Activated T-helper 1 cell treated with anti-CD3 and anti-CD28 coated beads, Interleukin-12 subunit alpha, Interleukin-12 subunit beta, Interleukin-2, Interleukin-4 antibody, amounts not matched to agents 30 ng/mL and 10 ng/mL and 1 ng/mL, durations not matched to agents 14 hours and 24 hours and 36 hours (primary cell): ENCODE measurements at regions of chr1 and their contacts with region 1.

Region 1: DNA sequence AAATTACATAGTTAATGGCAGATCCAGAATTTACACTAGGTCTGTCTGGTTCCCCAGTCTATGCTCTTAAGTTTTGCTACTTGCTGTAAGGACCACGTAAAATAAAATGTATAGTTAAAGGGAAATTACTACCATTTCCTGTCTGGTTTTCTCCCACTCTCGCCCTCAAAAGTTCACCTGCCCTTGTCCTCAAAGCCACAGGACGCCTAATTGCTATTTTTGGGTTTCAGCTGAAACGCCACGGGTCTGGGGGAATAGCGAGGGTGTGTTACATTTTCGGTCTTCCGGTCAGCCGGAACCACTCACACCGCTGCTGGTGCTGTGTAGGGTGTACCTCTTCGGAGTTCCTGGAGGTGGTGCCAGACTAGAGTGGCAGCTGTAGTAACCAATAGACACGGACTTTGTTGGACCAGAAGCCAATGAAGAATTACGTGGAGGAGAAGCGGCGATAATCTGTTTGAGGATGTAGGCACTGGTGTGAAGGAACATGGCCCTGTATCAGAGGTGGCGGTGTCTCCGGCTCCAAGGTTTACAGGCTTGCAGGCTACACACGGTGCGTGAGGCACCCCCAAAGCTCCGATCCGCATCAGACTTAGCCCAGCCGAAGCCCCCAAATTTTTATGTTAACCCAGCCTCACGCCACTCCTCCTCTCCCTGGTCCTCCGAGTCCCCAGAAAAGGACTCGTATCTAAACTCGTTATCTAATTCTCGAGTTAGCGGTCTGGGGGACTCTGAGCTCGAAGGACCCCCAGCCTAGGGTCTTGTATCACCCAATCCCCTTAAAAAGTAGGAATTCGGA is at the start of gene TARS2:
- DNase-seq: peak; percentile 94
- H3K4me3 Mint-ChIP-seq: peak within 1 kb of the TSS; percentile 98
- H3K27ac Mint-ChIP-seq: peak within 1 kb of the TSS; percentile 95
- H3K4me1 Mint-ChIP-seq: peaks cover 35% of the 10 kb centered on the region
- H3K27me3 Mint-ChIP-seq: no peaks in the 10 kb centered on the region
- total RNA-seq, gene TARS2: 77.3 and 77.4 TPM in 2 replicates

Region 2: DNA sequence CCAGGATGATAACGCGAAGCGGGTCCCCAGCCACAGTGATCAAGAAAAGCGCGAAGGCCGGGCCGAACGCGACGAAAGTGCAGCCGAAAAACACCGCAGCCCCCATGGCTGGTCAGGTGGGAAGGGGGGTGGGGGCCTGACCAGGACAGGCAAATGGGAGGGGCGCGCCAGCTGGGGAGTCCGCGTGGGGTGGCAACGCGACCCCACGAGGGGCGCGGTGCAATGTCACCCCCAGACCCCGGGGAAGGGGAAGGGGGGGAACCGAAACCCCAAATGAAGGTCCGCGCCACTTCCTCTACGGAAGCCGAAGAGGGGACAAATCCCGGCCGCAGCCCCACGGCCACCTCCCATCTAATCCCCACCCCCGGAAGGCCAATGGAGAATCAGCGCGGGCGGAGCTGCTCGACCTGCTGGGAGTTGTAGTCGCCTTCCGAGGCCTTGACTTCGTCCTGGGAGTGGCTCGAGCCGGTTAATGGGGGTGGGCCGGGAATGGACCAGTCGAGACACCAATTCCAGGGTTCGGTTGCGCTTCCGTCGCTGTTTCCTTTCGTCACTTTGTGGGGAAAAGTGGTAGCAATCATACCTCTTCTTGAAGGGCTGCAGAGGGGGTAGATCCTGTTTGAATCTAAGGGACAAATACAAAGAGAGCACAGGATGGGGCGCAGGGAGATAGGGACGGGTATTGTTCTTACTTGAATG is 218.3 kb before region 1 on chr1 and contains the start of gene APH1A:
- intact Hi-C with region 1: loop called (anchors 1 kb)
- DNase-seq: peak; percentile 94
- H3K4me3 Mint-ChIP-seq: peak within 1 kb of the TSS; percentile 93
- H3K27ac Mint-ChIP-seq: peak within 1 kb of the TSS; percentile 85
- H3K4me1 Mint-ChIP-seq: peaks cover 30% of the 10 kb centered on the region
- H3K27me3 Mint-ChIP-seq: peaks cover 3% of the 10 kb centered on the region
- total RNA-seq, gene APH1A: 102 and 111 TPM in 2 replicates

Region 3: GRCh38 chr1:150363426-150364230 is 123.5 kb before region 1 on chr1 and contains the start of gene RPRD2:
- intact Hi-C with region 1: loop called (anchors 1 kb)
- DNase-seq: peak; percentile 99
- H3K4me3 Mint-ChIP-seq: peak within 1 kb of the TSS; percentile 99
- H3K27ac Mint-ChIP-seq: peak within 1 kb of the TSS; percentile 97
- H3K4me1 Mint-ChIP-seq: peaks cover 41% of the 10 kb centered on the region
- H3K27me3 Mint-ChIP-seq: no peaks in the 10 kb centered on the region
- total RNA-seq, gene RPRD2: 24.4 and 24.7 TPM in 2 replicates

Region 4: GRCh38 chr1:150464422-150464826 is 22.7 kb before region 1 on chr1:
- intact Hi-C with region 1: loop called (anchors 1 kb)
- DNase-seq: peak; percentile 50
- H3K4me3 Mint-ChIP-seq: no peak overlapping the region
- H3K27ac Mint-ChIP-seq: peak overlapping the region; percentile 63
- H3K4me1 Mint-ChIP-seq: peaks cover 5% of the 10 kb centered on the region
- H3K27me3 Mint-ChIP-seq: no peaks in the 10 kb centered on the region

Region 5: DNA sequence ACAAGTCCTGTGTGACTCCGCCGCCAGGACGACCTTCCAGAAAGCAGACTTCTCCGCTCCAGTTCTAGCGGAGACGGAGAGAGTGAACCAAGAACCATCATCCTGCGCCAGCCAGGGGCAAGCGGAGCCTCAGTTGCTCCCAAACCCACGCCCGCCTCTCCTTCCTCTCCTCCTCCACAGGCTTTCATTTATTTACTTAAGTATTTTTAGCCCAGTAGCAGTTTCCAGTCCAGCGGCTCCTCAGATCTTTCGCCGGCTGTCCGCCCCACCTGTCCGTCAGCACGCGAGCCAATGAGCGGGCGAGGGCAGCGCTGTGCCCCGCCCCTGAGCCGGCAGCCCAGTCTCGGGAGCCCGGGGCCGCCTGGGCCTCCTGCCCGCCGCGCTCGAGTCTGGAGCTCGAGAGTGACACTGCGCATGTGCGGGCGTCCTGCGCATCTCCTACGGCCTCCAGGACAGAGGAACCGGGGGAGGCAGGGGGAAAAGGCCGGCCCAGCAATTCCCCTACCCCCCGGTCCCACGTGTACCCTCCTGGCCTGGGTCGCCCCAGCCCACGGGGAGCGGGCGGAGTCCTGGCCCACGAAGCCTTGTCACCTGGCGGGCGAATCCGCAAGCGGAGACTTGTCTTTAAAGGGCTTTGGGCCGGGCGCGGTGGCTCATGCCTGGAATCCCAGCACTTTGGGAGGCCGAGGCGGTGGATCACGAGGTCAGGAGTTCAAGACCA is 28.3 kb after region 1 on chr1 and contains the start of gene FALEC:
- intact Hi-C with region 1: loop called (anchors 1 kb)
- DNase-seq: peak; percentile 93
- H3K4me3 Mint-ChIP-seq: peak within 1 kb of the TSS; percentile 79
- H3K27ac Mint-ChIP-seq: peak within 1 kb of the TSS; percentile 83
- H3K4me1 Mint-ChIP-seq: peaks cover 16% of the 10 kb centered on the region
- H3K27me3 Mint-ChIP-seq: no peaks in the 10 kb centered on the region
- total RNA-seq, gene FALEC: not detected in 2 replicates

Region 6: GRCh38 chr1:150613061-150613920 is 126.1 kb after region 1 on chr1:
- intact Hi-C with region 1: loop called (anchors 2 kb)
- DNase-seq: peak; percentile 49
- H3K4me3 Mint-ChIP-seq: peak overlapping the region; percentile 53
- H3K27ac Mint-ChIP-seq: peak overlapping the region; percentile 98
- H3K4me1 Mint-ChIP-seq: peaks cover 62% of the 10 kb centered on the region
- H3K27me3 Mint-ChIP-seq: no peaks in the 10 kb centered on the region

Region 7: DNA sequence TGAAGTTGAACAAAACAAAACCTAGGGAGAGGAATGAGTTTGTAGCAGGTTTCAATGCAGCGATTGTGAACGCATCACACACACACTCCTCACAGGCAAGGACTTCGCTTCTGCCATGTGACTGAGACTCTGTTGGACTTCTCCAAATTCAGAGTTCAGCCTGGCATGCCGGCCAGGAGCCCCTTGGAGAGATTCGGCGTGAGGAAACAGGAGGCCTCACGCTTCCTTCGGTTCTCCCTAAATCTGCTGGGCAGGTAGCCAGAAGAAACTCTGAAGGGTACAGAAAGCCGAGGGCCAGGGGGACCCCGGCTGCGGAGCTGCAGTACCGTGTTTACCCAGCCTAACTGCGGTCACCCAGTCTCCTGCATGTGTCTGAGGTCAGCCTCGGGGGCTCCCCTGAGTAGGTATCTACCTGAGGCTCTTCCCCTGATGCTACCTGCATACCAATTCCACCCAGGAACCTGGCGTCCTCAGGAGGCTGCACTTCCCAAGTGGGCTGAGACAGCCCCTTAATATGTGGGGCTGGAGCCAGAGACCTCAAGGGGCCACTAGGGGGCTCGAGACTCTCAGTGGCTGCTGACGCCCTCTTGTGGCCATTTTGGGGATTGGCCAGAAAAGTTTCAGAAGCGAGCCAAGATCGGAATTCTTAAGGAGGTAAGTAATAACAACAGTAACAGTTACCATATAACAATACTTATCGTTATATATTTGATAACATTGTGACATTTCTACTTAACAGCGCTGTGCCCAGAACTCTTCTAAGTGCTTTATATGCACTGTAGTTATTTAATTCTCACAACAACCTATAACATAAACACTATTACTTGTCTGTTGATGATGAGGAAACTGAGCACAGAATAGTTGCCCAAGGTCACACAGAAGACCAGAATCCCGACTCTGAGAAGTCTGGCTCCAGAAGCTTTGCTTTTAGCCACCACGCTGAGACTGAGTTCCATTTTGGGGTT is 492.2 kb after region 1 on chr1:
- intact Hi-C with region 1: loop called (anchors 2 kb)
- DNase-seq: peak; percentile 80
- H3K4me3 Mint-ChIP-seq: no peak overlapping the region
- H3K27ac Mint-ChIP-seq: no peak overlapping the region
- H3K4me1 Mint-ChIP-seq: peaks cover 32% of the 10 kb centered on the region
- H3K27me3 Mint-ChIP-seq: no peaks in the 10 kb centered on the region